Naive thymus-derived CD4-positive, alpha-beta T cell (primary cell): ENCODE measurements at regions of chr5 and their contacts with region 1.

Region 1: GRCh38 chr5:139765409-139766217 is 30.0 kb upstream of the PSD2 start:
- DNase-seq: peak; percentile 62 to 93 (median 85)
- ATAC-seq: peak; percentile 95
- H3K4me3 ChIP-seq: peak overlapping the region; percentile 62
- H3K4me3 Mint-ChIP-seq: peak overlapping the region; percentile 37 to 84 (median 66)
- H3K27ac ChIP-seq: no peak overlapping the region
- H3K27ac Mint-ChIP-seq: peak overlapping the region in 2 of 9 donors; percentile 48 to 49
- H3K4me1 ChIP-seq: peaks cover 4 to 8% of the 10 kb centered on the region in 2 donors
- H3K4me1 Mint-ChIP-seq: peaks cover 0 to 12% (median 5%) of the 10 kb centered on the region in 7 donors
- H3K27me3 ChIP-seq: peaks cover 3 to 8% of the 10 kb centered on the region in 2 donors
- H3K27me3 Mint-ChIP-seq: peaks cover 22 to 53% (median 28%) of the 10 kb centered on the region in 5 donors

Region 2: DNA sequence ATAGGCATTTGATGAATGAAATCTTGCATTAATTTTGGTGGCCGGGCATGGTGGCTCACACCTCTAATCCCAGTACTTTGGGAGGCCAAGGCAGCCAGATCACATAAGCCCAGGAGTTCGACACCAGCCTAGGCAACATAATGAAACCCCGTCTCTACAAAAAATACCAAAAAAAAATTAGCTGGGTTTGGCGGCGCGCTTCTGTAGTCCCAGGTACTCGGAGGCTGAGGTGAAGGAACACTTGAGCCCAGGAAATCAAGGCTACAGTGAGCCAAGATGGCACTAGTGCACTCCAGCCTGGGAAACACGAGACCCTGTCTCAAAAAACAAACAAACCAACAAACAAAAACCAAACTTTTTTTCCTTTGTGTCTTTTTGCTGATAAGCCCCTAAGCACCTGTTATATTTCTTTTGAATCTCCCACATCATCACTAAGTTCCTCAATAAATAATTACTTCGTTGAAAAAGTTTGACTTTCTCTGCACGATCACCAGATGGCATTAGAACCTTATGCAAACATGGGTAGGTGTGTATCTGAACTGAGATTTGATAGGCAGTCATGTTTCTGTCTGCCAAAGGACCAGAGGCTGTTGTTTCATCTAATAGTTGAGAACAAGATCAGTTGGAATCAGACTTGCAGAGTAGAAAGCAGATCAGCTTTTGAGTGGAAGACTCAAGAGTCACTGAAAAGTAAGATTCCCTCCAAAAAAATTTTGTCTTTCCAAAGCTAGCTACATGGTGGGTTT is 477.6 kb before region 1 on chr5:
- CTCF ChIA-PET with region 1: no interaction called
- POLR2A ChIA-PET with region 1: no interaction called
- intact Hi-C with region 1: loop called in 1 of 2 experiments (anchors 1 kb)
- DNase-seq: peak in 4 of 9 donors; percentile 21 to 38 (median 34)
- ATAC-seq: peak; percentile 57
- H3K4me3 ChIP-seq: no peak overlapping the region
- H3K4me3 Mint-ChIP-seq: no peak overlapping the region
- H3K27ac ChIP-seq: no peak overlapping the region
- H3K27ac Mint-ChIP-seq: peak overlapping the region in 2 of 9 donors; percentile 0 to 7
- H3K4me1 ChIP-seq: peaks cover 0 to 3% of the 10 kb centered on the region in 2 donors
- H3K4me1 Mint-ChIP-seq: peaks cover 0 to 20% (median 5%) of the 10 kb centered on the region in 7 donors
- H3K27me3 ChIP-seq: no peaks in the 10 kb centered on the region
- H3K27me3 Mint-ChIP-seq: no peaks in the 10 kb centered on the region

Region 3: GRCh38 chr5:139543423-139543991 is 222.1 kb before region 1 on chr5:
- CTCF ChIA-PET with region 1: interaction called, 3 read pairs
- POLR2A ChIA-PET with region 1: no interaction called
- intact Hi-C with region 1: loop called in 1 of 2 experiments (anchors 1 kb)
- DNase-seq: peak; percentile 23 to 51 (median 47)
- ATAC-seq: peak; percentile 98
- H3K4me3 ChIP-seq: peak overlapping the region; percentile 32
- H3K4me3 Mint-ChIP-seq: peak overlapping the region; percentile 27 to 69 (median 62)
- H3K27ac ChIP-seq: peak overlapping the region; percentile 50
- H3K27ac Mint-ChIP-seq: peak overlapping the region in 7 of 9 donors; percentile 31 to 76 (median 54)
- H3K4me1 ChIP-seq: no peaks in the 10 kb centered on the region
- H3K4me1 Mint-ChIP-seq: peaks cover 1 to 13% (median 8%) of the 10 kb centered on the region in 7 donors
- H3K27me3 ChIP-seq: no peaks in the 10 kb centered on the region
- H3K27me3 Mint-ChIP-seq: no peaks in the 10 kb centered on the region

Region 4: DNA sequence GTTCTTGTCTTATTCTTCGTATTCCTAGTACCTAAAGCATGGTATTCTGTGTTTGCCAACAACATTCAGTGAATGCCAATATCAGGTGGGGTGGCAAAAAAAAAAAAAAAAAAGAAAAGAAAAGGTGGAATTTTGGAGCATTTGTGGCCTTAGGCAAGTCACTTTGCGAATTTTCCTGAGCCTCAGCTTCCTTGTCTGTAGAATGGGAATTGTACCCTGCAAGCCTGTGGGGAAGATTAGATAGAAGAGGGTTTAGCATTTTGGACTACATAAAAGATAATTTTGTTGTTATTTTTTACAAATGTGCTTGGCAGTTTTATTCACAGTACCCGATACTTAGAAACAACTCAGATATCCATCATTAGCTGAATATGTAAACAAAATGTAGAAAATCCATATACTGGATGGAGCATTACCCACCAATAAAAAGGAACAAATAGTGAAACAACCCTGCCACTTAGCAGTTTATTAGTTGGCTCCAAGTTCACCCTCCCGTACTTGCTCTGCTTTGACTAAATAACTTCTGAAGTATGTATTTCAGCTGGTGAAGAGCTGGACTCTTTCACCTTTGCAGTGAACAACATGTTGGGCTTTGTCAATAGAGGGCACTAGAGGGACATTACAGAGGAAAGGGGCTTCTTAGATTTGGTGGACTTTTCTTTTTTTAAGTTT is 190.8 kb before region 1 on chr5:
- CTCF ChIA-PET with region 1: interaction called, 8 read pairs
- POLR2A ChIA-PET with region 1: no interaction called
- intact Hi-C with region 1: loop called in 1 of 2 experiments (anchors 1 kb)
- DNase-seq: peak in 7 of 9 donors; percentile 27 to 60 (median 47)
- ATAC-seq: peak; percentile 75
- H3K4me3 ChIP-seq: no peak overlapping the region
- H3K4me3 Mint-ChIP-seq: peak overlapping the region in 9 of 10 donors; percentile 11 to 80 (median 53)
- H3K27ac ChIP-seq: peak overlapping the region; percentile 57
- H3K27ac Mint-ChIP-seq: peak overlapping the region; percentile 62 to 96 (median 90)
- H3K4me1 ChIP-seq: peaks cover 61 to 68% of the 10 kb centered on the region in 2 donors
- H3K4me1 Mint-ChIP-seq: peaks cover 56 to 88% (median 74%) of the 10 kb centered on the region in 7 donors
- H3K27me3 ChIP-seq: no peaks in the 10 kb centered on the region
- H3K27me3 Mint-ChIP-seq: no peaks in the 10 kb centered on the region

Region 5: GRCh38 chr5:139711067-139711905 is 54.3 kb before region 1 on chr5:
- CTCF ChIA-PET with region 1: interaction called, 3 read pairs
- POLR2A ChIA-PET with region 1: no interaction called
- intact Hi-C with region 1: loop called in 1 of 2 experiments (anchors 1 kb)
- DNase-seq: peak; percentile 37 to 74 (median 53)
- ATAC-seq: peak; percentile 75
- H3K4me3 ChIP-seq: peak overlapping the region; percentile 58
- H3K4me3 Mint-ChIP-seq: peak overlapping the region; percentile 74 to 85 (median 80)
- H3K27ac ChIP-seq: peak overlapping the region; percentile 63
- H3K27ac Mint-ChIP-seq: peak overlapping the region in 6 of 9 donors; percentile 25 to 87 (median 64)
- H3K4me1 ChIP-seq: peaks cover 14 to 19% of the 10 kb centered on the region in 2 donors
- H3K4me1 Mint-ChIP-seq: peaks cover 10 to 31% (median 23%) of the 10 kb centered on the region in 7 donors
- H3K27me3 ChIP-seq: no peaks in the 10 kb centered on the region
- H3K27me3 Mint-ChIP-seq: peaks cover 0 to 51% (median 0%) of the 10 kb centered on the region in 5 donors

Region 6: GRCh38 chr5:139745800-139746690 is 19.6 kb before region 1 on chr5:
- CTCF ChIA-PET with region 1: interaction called, 4 read pairs
- POLR2A ChIA-PET with region 1: no interaction called
- intact Hi-C with region 1: loop called in 1 of 2 experiments (anchors 1 kb)
- DNase-seq: peak; percentile 31 to 64 (median 41)
- ATAC-seq: peak; percentile 68
- H3K4me3 ChIP-seq: peak overlapping the region; percentile 79
- H3K4me3 Mint-ChIP-seq: peak overlapping the region; percentile 88 to 100 (median 91)
- H3K27ac ChIP-seq: no peak overlapping the region
- H3K27ac Mint-ChIP-seq: peak overlapping the region in 4 of 9 donors; percentile 13 to 82 (median 52)
- H3K4me1 ChIP-seq: peaks cover 7 to 8% of the 10 kb centered on the region in 2 donors
- H3K4me1 Mint-ChIP-seq: peaks cover 18 to 25% (median 23%) of the 10 kb centered on the region in 7 donors
- H3K27me3 ChIP-seq: no peaks in the 10 kb centered on the region
- H3K27me3 Mint-ChIP-seq: peaks cover 7 to 67% (median 15%) of the 10 kb centered on the region in 5 donors